ENCODE measurements at regions of chr15 and their contacts with region 1.

Region 1: DNA sequence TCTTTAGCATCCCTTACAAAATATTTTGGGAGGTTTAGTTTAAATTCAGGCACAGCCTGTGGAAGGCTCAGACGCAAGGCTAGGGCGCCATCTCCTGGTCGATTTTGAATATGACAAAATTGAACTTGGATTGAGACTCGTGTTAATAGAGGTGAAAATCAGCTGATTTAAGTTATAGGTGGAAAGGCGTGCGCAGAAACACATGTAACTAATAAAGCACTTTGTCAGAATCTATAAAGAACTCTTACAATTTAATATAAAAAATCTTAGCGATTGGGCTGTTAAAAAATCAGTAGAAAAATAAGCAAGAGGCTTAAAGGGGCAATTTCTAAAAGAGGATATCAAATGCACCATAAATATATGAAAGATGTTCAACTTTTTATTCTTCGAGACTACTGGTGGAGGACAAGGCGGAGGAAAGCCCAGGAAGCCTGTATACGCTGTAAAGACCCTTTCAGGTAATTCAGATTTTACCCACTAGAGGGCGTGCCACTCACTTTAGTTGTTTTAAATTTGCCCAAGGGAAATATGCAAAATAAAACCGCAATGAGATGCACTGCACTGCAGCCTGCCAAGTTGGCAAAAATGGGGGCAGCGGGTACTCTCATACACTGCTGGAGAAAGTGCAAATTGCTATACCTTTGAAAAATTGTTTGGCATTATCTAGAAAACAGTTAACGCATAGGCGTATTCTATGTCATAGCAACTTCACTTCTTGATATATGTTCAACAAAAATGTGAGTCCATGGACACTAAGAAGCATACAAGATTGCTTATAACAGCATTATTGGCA is 64.7 kb downstream of the SLC30A4 start:
- DNase-seq: peak; percentile 98
- ATAC-seq: peak; percentile 44
- H3K4me3 ChIP-seq: peak overlapping the region; percentile 66
- H3K27ac ChIP-seq: peak overlapping the region; percentile 92
- H3K4me1 ChIP-seq: peaks cover 48% of the 10 kb centered on the region
- H3K27me3 ChIP-seq: no peaks in the 10 kb centered on the region
- CTCF ChIP-seq: peak; percentile 79

Region 2: GRCh38 chr15:45198337-45199135 is 259.3 kb before region 1 on chr15:
- CTCF ChIA-PET with region 1: no interaction called
- POLR2A ChIA-PET with region 1: no interaction called
- intact Hi-C with region 1: loop called (anchors 10 kb)
- DNase-seq: peak; percentile 98
- ATAC-seq: peak; percentile 61
- H3K4me3 ChIP-seq: peak overlapping the region; percentile 92
- H3K27ac ChIP-seq: no peak overlapping the region
- H3K4me1 ChIP-seq: 0 out of 2 replicates have a peak, but pooled peaks cover 4% of the 10 kb centered on the region
- H3K27me3 ChIP-seq: no peaks in the 10 kb centered on the region
- CTCF ChIP-seq: peak; percentile 94

Region 3: GRCh38 chr15:45307230-45307924 is 150.5 kb before region 1 on chr15:
- CTCF ChIA-PET with region 1: no interaction called
- POLR2A ChIA-PET with region 1: no interaction called
- intact Hi-C with region 1: loop called (anchors 2 kb)
- DNase-seq: peak; percentile 71
- ATAC-seq: peak; percentile 68
- H3K4me3 ChIP-seq: peak overlapping the region; percentile 42
- H3K27ac ChIP-seq: no peak overlapping the region
- H3K4me1 ChIP-seq: peaks cover 9% of the 10 kb centered on the region; the same call in 1 of the 2 replicates
- H3K27me3 ChIP-seq: 0 out of 2 replicates have a peak, but pooled peaks cover 3% of the 10 kb centered on the region
- CTCF ChIP-seq: peak; percentile 76

Region 4: GRCh38 chr15:45399381-45400212 is 58.2 kb before region 1 on chr15:
- CTCF ChIA-PET with region 1: interaction called, 4 read pairs
- POLR2A ChIA-PET with region 1: interaction called, 4 read pairs
- intact Hi-C with region 1: loop called (anchors 2 kb)
- DNase-seq: peak; percentile 89
- ATAC-seq: peak; percentile 13; the same call in 1 of the 2 replicates
- H3K4me3 ChIP-seq: no peak overlapping the region
- H3K27ac ChIP-seq: no peak overlapping the region
- H3K4me1 ChIP-seq: peaks cover 28% of the 10 kb centered on the region
- H3K27me3 ChIP-seq: no peaks in the 10 kb centered on the region
- CTCF ChIP-seq: peak; percentile 82

Region 5: DNA sequence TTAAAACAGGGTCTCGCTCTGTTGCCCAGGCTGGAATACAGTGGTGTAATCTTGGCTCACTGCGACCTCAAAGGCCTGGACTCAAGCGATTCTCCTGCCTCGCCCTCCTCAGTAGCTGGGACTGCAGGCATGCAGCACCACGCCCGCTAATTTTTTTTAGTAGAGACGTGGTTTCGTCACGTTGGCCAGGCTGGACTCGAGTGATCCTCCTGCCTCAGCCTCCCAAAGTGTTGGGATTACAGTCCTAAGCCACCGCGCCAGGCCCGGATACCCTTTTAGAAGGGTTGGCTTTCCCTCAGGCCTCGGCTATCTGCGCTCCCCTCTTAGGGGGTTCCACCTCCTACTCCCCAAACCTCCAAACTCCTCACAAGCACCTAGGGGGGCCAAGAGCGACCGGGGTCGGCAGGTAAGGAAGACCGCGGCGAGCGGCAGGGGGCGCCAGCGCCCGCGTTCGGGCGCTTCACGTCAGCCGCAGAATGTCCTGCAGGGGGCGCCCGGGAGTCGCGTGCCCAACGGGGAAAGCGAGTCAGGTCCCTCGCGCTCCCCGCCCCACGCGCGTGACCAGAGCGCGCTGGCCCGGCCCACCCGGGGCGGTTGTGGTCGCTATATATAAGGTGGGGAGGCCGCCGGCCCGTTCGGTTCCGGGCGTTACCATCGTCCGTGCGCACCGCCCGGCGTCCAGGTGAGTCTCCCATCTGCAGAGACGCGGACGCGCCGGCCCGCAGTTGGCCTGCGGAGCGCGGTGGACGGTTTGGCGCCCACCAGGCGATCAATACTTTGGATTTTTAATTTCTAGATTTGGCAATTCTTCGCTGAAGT is 27.7 kb before region 1 on chr15:
- CTCF ChIA-PET with region 1: interaction called, 6 read pairs
- POLR2A ChIA-PET with region 1: no interaction called
- intact Hi-C with region 1: loop called (anchors 1 kb)
- DNase-seq: peak; percentile 70
- ATAC-seq: peak; percentile 93
- H3K4me3 ChIP-seq: peak overlapping the region; percentile 70
- H3K27ac ChIP-seq: no peak overlapping the region
- H3K4me1 ChIP-seq: peaks cover 14% of the 10 kb centered on the region; the same call in 1 of the 2 replicates
- H3K27me3 ChIP-seq: no peaks in the 10 kb centered on the region
- CTCF ChIP-seq: peak; percentile 100

Region 6: DNA sequence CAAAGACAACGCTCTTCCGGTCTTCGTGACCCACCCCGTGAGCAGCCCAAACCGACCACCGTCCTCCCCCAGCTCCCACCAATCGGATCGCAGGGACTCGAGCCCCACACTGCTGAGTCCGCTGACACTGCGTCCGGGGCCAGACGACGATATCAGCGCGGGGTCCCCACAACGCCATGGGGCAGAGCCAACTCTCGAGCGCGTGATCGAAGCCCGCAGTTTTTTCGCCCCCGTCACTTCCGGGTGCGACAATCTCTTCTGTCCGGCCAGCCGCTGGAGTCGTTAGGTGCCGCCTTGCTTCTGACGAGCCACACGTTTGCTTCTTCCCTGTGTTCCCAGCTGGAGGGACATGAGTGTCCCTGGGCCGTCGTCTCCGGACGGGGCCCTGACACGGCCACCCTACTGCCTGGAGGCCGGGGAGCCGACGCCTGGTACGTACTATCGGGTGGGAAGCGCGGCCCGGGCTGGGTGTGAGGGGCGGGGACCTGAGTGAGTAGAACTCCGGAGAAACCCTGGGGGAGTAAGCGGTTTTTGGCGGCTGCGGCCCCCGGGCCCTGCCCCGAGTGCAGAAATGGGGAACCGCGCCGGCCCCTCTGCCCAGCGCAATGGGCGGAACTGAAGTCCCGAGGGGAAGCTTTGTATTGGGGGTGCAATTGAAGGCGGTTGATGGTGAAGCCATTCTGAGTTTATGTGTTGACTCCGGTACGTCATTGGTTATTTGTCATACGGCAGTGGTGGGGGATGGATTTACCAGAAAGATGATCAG is 129.4 kb after region 1 on chr15 and contains the start of gene BLOC1S6:
- CTCF ChIA-PET with region 1: interaction called, 12 read pairs
- POLR2A ChIA-PET with region 1: no interaction called
- intact Hi-C with region 1: no loop called
- DNase-seq: peak; percentile 81
- ATAC-seq: peak; percentile 76
- H3K4me3 ChIP-seq: peak within 1 kb of the TSS; percentile 98
- H3K27ac ChIP-seq: peak within 1 kb of the TSS; percentile 93
- H3K4me1 ChIP-seq: peaks cover 32% of the 10 kb centered on the region
- H3K27me3 ChIP-seq: no peaks in the 10 kb centered on the region
- CTCF ChIP-seq: no peak
- total RNA-seq, gene BLOC1S6: 28.6 and 40.1 TPM in 2 replicates

Region 7: DNA sequence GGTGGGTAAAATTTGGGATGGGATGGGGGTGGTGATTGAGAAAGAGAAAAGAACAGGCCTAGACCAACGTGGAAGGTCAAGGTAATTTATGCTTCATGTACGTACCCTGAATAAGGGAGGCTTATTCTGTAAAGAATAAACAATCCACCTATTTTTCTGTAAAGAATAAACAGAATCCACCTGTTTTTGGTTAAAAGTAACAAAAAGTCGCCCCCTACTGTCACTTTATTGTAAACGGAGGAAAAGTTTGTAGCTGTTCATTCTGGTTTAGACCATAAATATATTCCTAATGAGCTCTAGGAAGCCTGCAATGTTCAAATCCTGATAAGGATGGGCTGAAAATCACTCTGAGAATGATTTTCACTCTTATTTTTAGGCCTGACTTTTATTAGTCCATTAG is 153.5 kb after region 1 on chr15:
- CTCF ChIA-PET with region 1: interaction called, 4 read pairs
- POLR2A ChIA-PET with region 1: no interaction called
- intact Hi-C with region 1: loop called (anchors 1 kb)
- DNase-seq: peak; percentile 56
- ATAC-seq: no peak; the same call in 1 of the 2 replicates
- H3K4me3 ChIP-seq: no peak overlapping the region
- H3K27ac ChIP-seq: no peak overlapping the region
- H3K4me1 ChIP-seq: peaks cover 12% of the 10 kb centered on the region
- H3K27me3 ChIP-seq: no peaks in the 10 kb centered on the region
- CTCF ChIP-seq: peak; percentile 69

Measured in PC-3 (cell line).